ENCODE measurements at regions of chr9 and their contacts with region 1.

Region 1: GRCh38 chr9:130770679-130771442 is 64.2 kb upstream of the ABL1 start:
- DNase-seq: peak; percentile 43
- ATAC-seq: peak; percentile 98
- H3K4me3 ChIP-seq: no peak overlapping the region
- H3K27ac ChIP-seq: no peak overlapping the region
- H3K4me1 ChIP-seq: no peaks in the 10 kb centered on the region
- H3K27me3 ChIP-seq: no peaks in the 10 kb centered on the region
- CTCF ChIP-seq: peak; percentile 49 to 76 (median 70); a peak in 5 of 6 replicates
- POLR2A ChIP-seq: no peak
- RAD21 ChIP-seq: peak; percentile 77

Region 2: GRCh38 chr9:130331573-130331972 is 439.3 kb before region 1 on chr9:
- CTCF ChIA-PET with region 1: no interaction called
- POLR2A ChIA-PET with region 1: no interaction called
- RAD21 ChIA-PET with region 1: no interaction called
- intact Hi-C with region 1: no loop called
- DNase-seq: no peak
- ATAC-seq: no peak
- H3K4me3 ChIP-seq: no peak overlapping the region
- H3K27ac ChIP-seq: no peak overlapping the region
- H3K4me1 ChIP-seq: peaks cover 9 to 23% of the 10 kb centered on the region in 2 experiments; a peak in 3 of 4 replicates
- H3K27me3 ChIP-seq: peaks cover 18% of the 10 kb centered on the region; the same call in 1 of the 2 replicates
- CTCF ChIP-seq: no peak
- POLR2A ChIP-seq: no peak
- RAD21 ChIP-seq: no peak

Region 3: DNA sequence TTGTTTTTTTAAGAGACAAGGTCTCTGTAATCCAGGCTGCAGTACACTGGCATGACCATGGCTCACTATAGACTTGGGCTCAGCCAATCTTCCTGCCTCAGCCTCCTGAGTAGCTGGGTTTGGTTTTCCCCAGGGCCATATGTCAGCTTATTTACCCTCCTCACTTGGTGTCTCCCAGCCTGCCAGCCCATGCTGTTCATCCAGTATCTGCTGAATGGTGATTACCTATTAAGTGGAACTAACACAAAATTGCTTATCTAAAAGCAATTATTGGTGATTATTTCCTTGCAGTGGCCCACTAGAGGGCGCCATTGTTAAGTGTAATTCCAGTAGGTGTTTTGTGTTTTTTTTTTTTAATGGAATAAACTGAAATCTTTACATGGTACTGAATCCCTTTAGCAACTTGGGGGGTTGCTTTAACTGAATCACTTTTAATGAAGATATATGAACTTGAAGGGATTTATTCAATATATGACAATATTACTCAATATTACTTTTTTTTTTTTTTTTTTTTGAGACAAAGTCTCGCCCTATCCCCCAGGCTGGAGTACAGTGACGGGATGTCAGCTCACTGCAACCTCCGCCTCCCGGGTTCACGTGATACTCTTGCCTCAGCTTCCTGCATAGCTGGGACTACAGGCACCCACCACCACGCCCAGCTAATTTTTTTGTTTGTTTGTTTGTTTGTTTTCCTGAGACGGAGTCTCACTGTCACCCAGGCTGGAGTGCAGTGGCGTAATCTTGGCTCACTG is 63.5 kb before region 1 on chr9:
- CTCF ChIA-PET with region 1: no interaction called
- POLR2A ChIA-PET with region 1: interaction called, 3 read pairs
- RAD21 ChIA-PET with region 1: no interaction called
- intact Hi-C with region 1: loop called (anchors 1 kb)
- DNase-seq: no peak
- ATAC-seq: peak; percentile 72
- H3K4me3 ChIP-seq: no peak overlapping the region
- H3K27ac ChIP-seq: no peak overlapping the region
- H3K4me1 ChIP-seq: peaks cover 0 to 12% of the 10 kb centered on the region in 2 experiments; a peak in 1 of 4 replicates
- H3K27me3 ChIP-seq: no peaks in the 10 kb centered on the region
- CTCF ChIP-seq: peak; percentile 60 to 87 (median 83)
- POLR2A ChIP-seq: no peak
- RAD21 ChIP-seq: peak; percentile 84

Region 4: GRCh38 chr9:130847327-130848217 is 76.7 kb after region 1 on chr9:
- CTCF ChIA-PET with region 1: interaction called, 3 read pairs
- POLR2A ChIA-PET with region 1: no interaction called
- RAD21 ChIA-PET with region 1: no interaction called
- intact Hi-C with region 1: loop called (anchors 5 kb)
- DNase-seq: no peak
- ATAC-seq: peak; percentile 51
- H3K4me3 ChIP-seq: no peak overlapping the region; a peak in 1 of 4 replicates
- H3K27ac ChIP-seq: peak overlapping the region; percentile 77
- H3K4me1 ChIP-seq: peaks cover 41 to 45% of the 10 kb centered on the region in 2 experiments
- H3K27me3 ChIP-seq: no peaks in the 10 kb centered on the region
- CTCF ChIP-seq: peak in 2 of 3 experiments; percentile 20 to 31; a peak in 2 of 6 replicates
- POLR2A ChIP-seq: no peak
- RAD21 ChIP-seq: no peak

Region 5: GRCh38 chr9:131393622-131394463 is 623.0 kb after region 1 on chr9 and contains the start of gene PRRC2B:
- CTCF ChIA-PET with region 1: no interaction called
- POLR2A ChIA-PET with region 1: no interaction called
- RAD21 ChIA-PET with region 1: no interaction called
- intact Hi-C with region 1: no loop called
- DNase-seq: peak; percentile 33
- ATAC-seq: peak; percentile 77
- H3K4me3 ChIP-seq: peak within 1 kb of the TSS; percentile 61 to 77
- H3K27ac ChIP-seq: peak within 1 kb of the TSS; percentile 90
- H3K4me1 ChIP-seq: peaks cover 42 to 48% of the 10 kb centered on the region in 2 experiments
- H3K27me3 ChIP-seq: no peaks in the 10 kb centered on the region
- CTCF ChIP-seq: peak in 1 of 3 experiments; percentile 34; a peak in 1 of 6 replicates
- POLR2A ChIP-seq: peak; percentile 39
- RAD21 ChIP-seq: no peak; the same call in 1 of the 2 replicates
- total RNA-seq, gene PRRC2B: 170 TPM